Naive thymus-derived CD4-positive, alpha-beta T cell (primary cell): ENCODE measurements at regions of chr1 and their contacts with region 1.

Region 1: DNA sequence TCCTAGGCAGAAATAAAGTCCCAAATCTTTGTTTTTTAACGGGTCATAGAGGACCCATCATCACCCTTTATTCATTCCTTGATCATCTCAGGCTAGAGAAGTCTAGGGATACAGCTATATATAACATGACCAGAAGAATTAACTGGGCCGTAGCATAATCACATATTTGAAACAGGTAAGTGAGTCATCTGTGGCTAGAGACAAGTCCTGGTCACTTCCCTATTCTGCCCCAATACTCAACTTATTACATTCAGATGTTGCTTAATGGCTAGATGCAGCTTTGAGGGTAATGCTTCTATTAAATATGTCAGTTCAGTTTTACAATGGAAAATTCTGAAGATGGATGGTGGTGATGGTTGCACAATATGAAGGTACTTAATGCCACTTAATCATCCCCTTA is 47.0 kb downstream of the EXO1 start:
- DNase-seq: no peak
- ATAC-seq: no peak
- H3K4me3 ChIP-seq: no peak overlapping the region
- H3K4me3 Mint-ChIP-seq: no peak overlapping the region
- H3K27ac ChIP-seq: no peak overlapping the region
- H3K27ac Mint-ChIP-seq: no peak overlapping the region
- H3K4me1 ChIP-seq: no peaks in the 10 kb centered on the region
- H3K4me1 Mint-ChIP-seq: no peaks in the 10 kb centered on the region
- H3K27me3 ChIP-seq: no peaks in the 10 kb centered on the region
- H3K27me3 Mint-ChIP-seq: no peaks in the 10 kb centered on the region

Region 2: DNA sequence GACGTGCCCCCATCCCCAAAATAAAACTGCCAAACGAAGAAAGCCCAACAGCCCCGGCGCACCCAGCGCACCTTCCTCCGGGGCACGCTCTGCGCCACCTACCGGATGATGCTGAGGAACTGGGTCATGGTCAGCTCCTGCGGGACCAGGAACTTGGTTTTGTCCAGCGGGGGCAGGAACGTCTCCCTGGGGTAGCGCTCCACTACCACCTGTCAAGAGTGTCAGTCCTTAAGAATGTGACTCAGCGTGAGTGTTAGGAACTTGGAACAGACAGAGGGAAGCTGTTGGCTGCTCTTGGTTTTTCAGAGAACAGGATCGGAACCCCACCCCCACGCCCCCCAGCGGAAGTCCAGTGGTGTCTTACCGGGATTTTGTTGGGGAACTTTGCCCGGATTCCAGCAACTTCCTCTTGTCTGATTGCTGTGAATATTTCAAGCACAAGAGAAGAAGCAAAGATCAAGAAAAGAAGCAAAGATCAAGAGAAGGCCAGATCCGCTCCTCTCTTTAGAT is 103.5 kb after region 1 on chr1:
- CTCF ChIA-PET with region 1: no interaction called
- POLR2A ChIA-PET with region 1: no interaction called
- intact Hi-C with region 1: loop called (anchors 1 to 10 kb)
- DNase-seq: peak; percentile 10 to 53 (median 30)
- ATAC-seq: peak; percentile 69
- H3K4me3 ChIP-seq: peak overlapping the region; percentile 39
- H3K4me3 Mint-ChIP-seq: peak overlapping the region; percentile 16 to 68 (median 61)
- H3K27ac ChIP-seq: no peak overlapping the region
- H3K27ac Mint-ChIP-seq: no peak overlapping the region
- H3K4me1 ChIP-seq: no peaks in the 10 kb centered on the region
- H3K4me1 Mint-ChIP-seq: peaks cover 0 to 7% (median 5%) of the 10 kb centered on the region in 7 donors
- H3K27me3 ChIP-seq: peaks cover 0 to 3% of the 10 kb centered on the region in 2 donors
- H3K27me3 Mint-ChIP-seq: peaks cover 0 to 6% (median 4%) of the 10 kb centered on the region in 5 donors

Region 3: GRCh38 chr1:242017584-242018233 is 122.7 kb after region 1 on chr1:
- CTCF ChIA-PET with region 1: no interaction called
- POLR2A ChIA-PET with region 1: no interaction called
- intact Hi-C with region 1: loop called (anchors 1 to 2 kb)
- DNase-seq: peak in 6 of 9 donors; percentile 6 to 34 (median 14)
- ATAC-seq: peak; percentile 64
- H3K4me3 ChIP-seq: no peak overlapping the region
- H3K4me3 Mint-ChIP-seq: no peak overlapping the region
- H3K27ac ChIP-seq: no peak overlapping the region
- H3K27ac Mint-ChIP-seq: no peak overlapping the region
- H3K4me1 ChIP-seq: no peaks in the 10 kb centered on the region
- H3K4me1 Mint-ChIP-seq: no peaks in the 10 kb centered on the region
- H3K27me3 ChIP-seq: no peaks in the 10 kb centered on the region
- H3K27me3 Mint-ChIP-seq: no peaks in the 10 kb centered on the region